ENCODE measurements at regions of chr18 and their contacts with region 1.

Region 1: GRCh38 chr18:5424903-5425664 is 118.7 kb downstream of the EPB41L3 start:
- DNase-seq: peak in 6 of 9 donors; percentile 18 to 45 (median 34)
- ATAC-seq: peak; percentile 76
- H3K4me3 ChIP-seq: no peak overlapping the region
- H3K4me3 Mint-ChIP-seq: no peak overlapping the region
- H3K27ac ChIP-seq: no peak overlapping the region
- H3K27ac Mint-ChIP-seq: no peak overlapping the region
- H3K4me1 ChIP-seq: no peaks in the 10 kb centered on the region
- H3K4me1 Mint-ChIP-seq: peaks cover 0 to 11% (median 3%) of the 10 kb centered on the region in 7 donors
- H3K27me3 ChIP-seq: no peaks in the 10 kb centered on the region
- H3K27me3 Mint-ChIP-seq: peaks cover 0 to 12% (median 4%) of the 10 kb centered on the region in 5 donors

Region 2: GRCh38 chr18:5630057-5630899 is 205.2 kb after region 1 on chr18:
- CTCF ChIA-PET with region 1: no interaction called
- POLR2A ChIA-PET with region 1: no interaction called
- intact Hi-C with region 1: loop called in 1 of 2 experiments (anchors 10 kb)
- DNase-seq: peak in 7 of 9 donors; percentile 17 to 59 (median 30)
- ATAC-seq: peak; percentile 89
- H3K4me3 ChIP-seq: no peak overlapping the region
- H3K4me3 Mint-ChIP-seq: peak overlapping the region in 6 of 10 donors; percentile 65 to 93 (median 74)
- H3K27ac ChIP-seq: no peak overlapping the region
- H3K27ac Mint-ChIP-seq: no peak overlapping the region
- H3K4me1 ChIP-seq: peaks cover 0 to 5% of the 10 kb centered on the region in 2 donors
- H3K4me1 Mint-ChIP-seq: peaks cover 0 to 12% (median 7%) of the 10 kb centered on the region in 7 donors
- H3K27me3 ChIP-seq: peaks cover 0 to 3% of the 10 kb centered on the region in 2 donors
- H3K27me3 Mint-ChIP-seq: peaks cover 23 to 45% (median 36%) of the 10 kb centered on the region in 5 donors